Heart left ventricle (tissue), 16 donors: ENCODE measurements at regions of chr18 and their contacts with region 1.

Region 1: DNA sequence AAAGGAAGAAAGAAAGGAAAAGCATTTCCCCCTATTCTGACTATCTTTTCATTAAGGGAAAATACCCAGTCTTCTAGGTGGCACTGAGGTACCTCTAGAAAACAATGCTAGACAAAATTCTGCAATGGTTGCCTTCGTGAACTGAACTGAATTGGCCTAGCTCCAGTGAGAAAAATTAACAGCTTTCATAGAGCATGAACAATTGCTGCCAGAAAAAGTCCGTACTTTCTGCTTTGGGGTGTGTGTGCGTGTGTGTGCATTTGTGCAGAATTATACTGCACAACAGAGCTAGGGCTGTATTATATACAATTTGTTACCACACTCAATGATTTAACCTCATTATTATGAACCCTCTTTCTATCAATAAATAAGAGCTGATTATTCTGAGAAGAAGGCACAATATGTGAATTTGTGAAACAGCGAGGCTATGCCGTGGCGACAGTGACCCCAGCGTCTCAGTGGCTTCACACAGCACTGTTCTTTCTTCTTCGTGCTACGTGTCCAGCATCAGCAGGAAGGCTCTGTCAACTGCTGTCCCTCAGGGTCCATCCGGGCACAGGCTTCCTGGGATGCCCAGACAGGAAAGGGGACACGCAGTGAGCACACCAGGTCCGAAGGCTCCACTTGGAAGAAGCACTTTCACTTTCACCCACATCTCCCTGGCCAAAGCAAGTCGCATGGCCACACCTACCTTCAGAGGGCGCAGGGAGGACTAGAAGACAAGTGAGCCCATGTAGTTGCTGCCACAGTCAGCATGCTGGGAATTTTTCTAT is 47.5 kb downstream of the PTGR3 start:
- DNase-seq: peak in 3 of 5 donors; percentile 34 to 37 (median 36)
- ATAC-seq: peak; percentile 29 to 71 (median 54)
- H3K4me3 ChIP-seq: peak overlapping the region in 11 of 12 donors; percentile 2 to 65 (median 47)
- H3K27ac ChIP-seq: peak overlapping the region in 5 of 12 donors; percentile 7 to 39 (median 27)
- H3K4me1 ChIP-seq: peaks cover 0 to 8% (median 0%) of the 10 kb centered on the region in 12 donors
- H3K27me3 ChIP-seq: no peaks in the 10 kb centered on the region
- CTCF ChIP-seq: peak in 3 of 12 donors; percentile 10 to 26 (median 20)
- POLR2A ChIP-seq: no peak

Region 2: GRCh38 chr18:74896390-74896991 is 265.0 kb before region 1 on chr18:
- intact Hi-C with region 1: loop called in 2 of 10 experiments (anchors 5 to 10 kb)
- DNase-seq: peak in 4 of 5 donors; percentile 20 to 37 (median 26)
- ATAC-seq: peak; percentile 78 to 82 (median 80)
- H3K4me3 ChIP-seq: no peak overlapping the region
- H3K27ac ChIP-seq: no peak overlapping the region
- H3K4me1 ChIP-seq: peaks cover 0 to 20% (median 0%) of the 10 kb centered on the region in 12 donors
- H3K27me3 ChIP-seq: no peaks in the 10 kb centered on the region
- CTCF ChIP-seq: peak; percentile 31 to 56 (median 48)
- POLR2A ChIP-seq: no peak

Region 3: GRCh38 chr18:74963820-74964446 is 197.5 kb before region 1 on chr18:
- intact Hi-C with region 1: loop called in 1 of 10 experiments (anchors 10 kb)
- DNase-seq: peak in 4 of 5 donors; percentile 40 to 55 (median 46)
- ATAC-seq: peak; percentile 69 to 91 (median 90)
- H3K4me3 ChIP-seq: no peak overlapping the region
- H3K27ac ChIP-seq: no peak overlapping the region
- H3K4me1 ChIP-seq: peaks cover 0 to 9% (median 0%) of the 10 kb centered on the region in 12 donors
- H3K27me3 ChIP-seq: no peaks in the 10 kb centered on the region
- CTCF ChIP-seq: peak in 11 of 12 donors; percentile 16 to 60 (median 44)
- POLR2A ChIP-seq: no peak

Region 4: GRCh38 chr18:75070625-75071483 is 90.6 kb before region 1 on chr18:
- intact Hi-C with region 1: loop called in 1 of 10 experiments (anchors 10 kb)
- DNase-seq: peak in 2 of 5 donors; percentile 44 to 53
- ATAC-seq: peak; percentile 50 to 83 (median 54)
- H3K4me3 ChIP-seq: peak overlapping the region in 10 of 12 donors; percentile 8 to 46 (median 36)
- H3K27ac ChIP-seq: peak overlapping the region; percentile 48 to 89 (median 76)
- H3K4me1 ChIP-seq: peaks cover 0 to 28% (median 2%) of the 10 kb centered on the region in 12 donors
- H3K27me3 ChIP-seq: no peaks in the 10 kb centered on the region
- CTCF ChIP-seq: no peak
- POLR2A ChIP-seq: peak in 1 of 2 donors; percentile 54

Region 5: DNA sequence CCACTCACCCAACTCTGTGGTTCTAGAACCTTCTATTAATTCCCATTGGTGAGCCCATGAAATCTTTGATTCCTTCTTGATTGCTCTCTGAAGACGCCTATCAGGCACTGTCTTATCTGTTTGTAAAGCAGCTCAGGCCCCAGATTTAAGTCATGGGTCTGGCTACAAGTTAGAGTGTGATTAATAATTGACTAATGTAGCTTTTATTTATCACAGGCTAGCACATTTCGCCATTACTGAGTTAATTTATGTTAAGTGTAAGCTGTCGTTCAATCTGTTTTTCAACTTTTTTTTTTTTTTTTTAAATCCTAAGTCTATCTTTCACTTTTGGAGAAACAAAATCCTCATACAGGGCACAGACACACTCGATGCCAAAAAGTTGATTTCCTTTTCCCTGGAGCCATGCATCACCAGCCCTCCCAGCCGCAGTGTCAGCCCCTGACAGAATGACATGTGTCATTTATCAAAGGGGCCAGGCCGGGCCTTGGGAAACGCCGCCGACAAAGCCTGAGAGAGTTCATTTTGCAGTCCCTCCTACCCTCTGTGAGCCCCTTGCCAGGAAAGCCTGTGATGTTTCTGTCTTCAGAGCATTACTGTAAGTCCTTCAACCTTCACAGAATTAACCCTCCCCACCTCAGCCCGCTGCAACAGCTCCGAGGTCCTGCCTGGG is 65.0 kb after region 1 on chr18:
- intact Hi-C with region 1: no loop called
- DNase-seq: peak in 1 of 5 donors; percentile 46
- ATAC-seq: peak in 3 of 4 donors; percentile 19 to 40 (median 23)
- H3K4me3 ChIP-seq: peak overlapping the region in 11 of 12 donors; percentile 1 to 46 (median 31)
- H3K27ac ChIP-seq: peak overlapping the region in 11 of 12 donors; percentile 17 to 60 (median 51)
- H3K4me1 ChIP-seq: peaks cover 3 to 79% (median 58%) of the 10 kb centered on the region in 12 donors
- H3K27me3 ChIP-seq: no peaks in the 10 kb centered on the region
- CTCF ChIP-seq: no peak
- POLR2A ChIP-seq: no peak

Region 6: DNA sequence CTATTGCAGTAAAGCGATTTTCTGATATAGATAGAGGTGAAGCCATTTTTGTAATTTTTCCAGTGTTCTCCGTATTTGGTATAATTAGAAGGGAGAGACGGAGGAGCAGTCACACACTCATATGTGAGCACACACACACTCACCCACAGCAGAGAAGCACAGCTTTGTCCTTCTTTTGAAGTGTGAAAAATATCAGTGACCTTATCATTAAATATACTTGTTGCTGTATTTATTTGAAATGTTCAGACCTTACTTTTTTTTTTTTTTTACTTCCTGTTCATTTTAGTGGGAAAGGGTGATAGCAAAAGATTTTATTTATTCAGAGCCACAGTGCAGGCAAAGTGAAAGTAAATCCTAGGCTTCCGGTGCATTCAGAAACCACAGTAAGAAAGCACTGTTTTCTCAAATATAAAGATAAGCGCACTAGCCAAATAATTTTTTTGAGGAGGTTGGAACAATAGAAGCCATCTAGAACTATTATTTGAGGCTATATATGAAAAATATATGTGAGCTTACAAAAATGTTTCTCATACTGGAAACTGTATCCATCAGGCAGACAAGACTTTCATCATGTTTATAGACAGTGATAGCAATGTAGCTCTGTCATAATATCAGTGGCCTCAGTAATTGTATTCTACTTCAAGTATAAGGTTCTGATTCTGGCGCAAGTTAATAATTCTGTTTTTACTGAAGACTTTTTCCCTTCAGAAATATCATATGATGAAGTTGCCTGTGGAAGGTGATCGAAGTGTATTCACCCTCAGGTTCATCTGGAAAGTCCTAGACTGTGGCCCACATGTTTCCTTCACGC is 86.4 kb after region 1 on chr18:
- intact Hi-C with region 1: loop called in 1 of 10 experiments (anchors 10 kb)
- DNase-seq: no peak
- ATAC-seq: peak in 2 of 4 donors; percentile 59 to 67
- H3K4me3 ChIP-seq: peak overlapping the region; percentile 12 to 60 (median 42)
- H3K27ac ChIP-seq: peak overlapping the region; percentile 43 to 90 (median 76)
- H3K4me1 ChIP-seq: peaks cover 0 to 70% (median 37%) of the 10 kb centered on the region in 12 donors
- H3K27me3 ChIP-seq: no peaks in the 10 kb centered on the region
- CTCF ChIP-seq: no peak
- POLR2A ChIP-seq: no peak

Region 7: GRCh38 chr18:75660932-75661331 is 499.5 kb after region 1 on chr18:
- intact Hi-C with region 1: no loop called
- DNase-seq: no peak
- ATAC-seq: no peak
- H3K4me3 ChIP-seq: no peak overlapping the region
- H3K27ac ChIP-seq: no peak overlapping the region
- H3K4me1 ChIP-seq: no peaks in the 10 kb centered on the region
- H3K27me3 ChIP-seq: no peaks in the 10 kb centered on the region
- CTCF ChIP-seq: no peak
- POLR2A ChIP-seq: no peak